CD4-positive, alpha-beta memory T cell (primary cell): ENCODE measurements at regions of chr12 and their contacts with region 1.

Region 1: GRCh38 chr12:49553512-49554088 is 14.3 kb downstream of the MCRS1 start:
- DNase-seq: peak in 4 of 5 donors; percentile 37 to 59 (median 50)
- H3K4me3 ChIP-seq: no peak overlapping the region
- H3K4me3 Mint-ChIP-seq: no peak overlapping the region
- H3K27ac ChIP-seq: no peak overlapping the region
- H3K27ac Mint-ChIP-seq: peak overlapping the region in 3 of 7 donors; percentile 14 to 54 (median 21)
- H3K4me1 ChIP-seq: peaks cover 4% of the 10 kb centered on the region
- H3K4me1 Mint-ChIP-seq: peaks cover 5 to 11% (median 8%) of the 10 kb centered on the region in 4 donors
- H3K27me3 ChIP-seq: peaks cover 3% of the 10 kb centered on the region
- H3K27me3 Mint-ChIP-seq: peaks cover 3 to 12% of the 10 kb centered on the region in 2 donors

Region 2: DNA sequence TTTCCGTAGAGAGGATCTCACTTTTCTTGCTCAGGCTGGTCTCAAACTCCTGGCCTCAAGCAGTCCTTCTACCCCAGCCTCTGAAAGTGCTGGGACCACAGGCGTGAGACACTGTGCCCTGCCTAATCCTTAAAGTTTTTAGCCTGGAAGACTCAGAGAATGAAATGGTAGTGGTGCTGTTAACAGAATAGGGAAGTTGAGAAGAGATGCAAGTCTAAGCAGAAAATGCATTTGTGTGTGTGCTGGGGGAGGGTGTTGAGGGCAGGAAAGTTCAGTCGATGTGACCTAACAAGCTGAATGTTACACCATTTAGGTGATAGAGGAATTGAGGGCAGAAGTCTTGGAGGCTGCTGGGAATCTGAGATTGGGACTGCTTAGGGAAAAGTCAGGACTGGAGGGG is 357.9 kb before region 1 on chr12:
- CTCF ChIA-PET with region 1: no interaction called
- POLR2A ChIA-PET with region 1: no interaction called
- intact Hi-C with region 1: no loop called
- DNase-seq: no peak
- H3K4me3 ChIP-seq: no peak overlapping the region
- H3K4me3 Mint-ChIP-seq: no peak overlapping the region
- H3K27ac ChIP-seq: no peak overlapping the region
- H3K27ac Mint-ChIP-seq: peak overlapping the region in 2 of 7 donors; percentile 8 to 55
- H3K4me1 ChIP-seq: peaks cover under 1% of the 10 kb centered on the region
- H3K4me1 Mint-ChIP-seq: peaks cover 0 to under 1% (median under 1%) of the 10 kb centered on the region in 4 donors
- H3K27me3 ChIP-seq: no peaks in the 10 kb centered on the region
- H3K27me3 Mint-ChIP-seq: peaks cover 1 to 7% of the 10 kb centered on the region in 2 donors

Region 3: GRCh38 chr12:49580572-49581535 is 27.3 kb after region 1 on chr12:
- CTCF ChIA-PET with region 1: interaction called, 64 read pairs
- POLR2A ChIA-PET with region 1: no interaction called
- intact Hi-C with region 1: loop called (anchors 1 kb)
- DNase-seq: peak in 4 of 5 donors; percentile 32 to 57 (median 48)
- H3K4me3 ChIP-seq: no peak overlapping the region
- H3K4me3 Mint-ChIP-seq: no peak overlapping the region
- H3K27ac ChIP-seq: no peak overlapping the region
- H3K27ac Mint-ChIP-seq: peak overlapping the region in 3 of 7 donors; percentile 3 to 61 (median 4)
- H3K4me1 ChIP-seq: no peaks in the 10 kb centered on the region
- H3K4me1 Mint-ChIP-seq: peaks cover 0 to 7% (median 5%) of the 10 kb centered on the region in 4 donors
- H3K27me3 ChIP-seq: no peaks in the 10 kb centered on the region
- H3K27me3 Mint-ChIP-seq: no peaks in the 10 kb centered on the region